ENCODE measurements at regions of chr6 and their contacts with region 1.

Region 1: GRCh38 chr6:29752451-29753308 is 29.4 kb downstream of the HLA-F start:
- DNase-seq: peak; percentile 69 to 86 (median 77)
- ATAC-seq: peak; percentile 87
- H3K4me3 ChIP-seq: peak overlapping the region; percentile 99
- H3K4me3 Mint-ChIP-seq: peak overlapping the region; percentile 85 to 97 (median 93)
- H3K27ac ChIP-seq: peak overlapping the region; percentile 69
- H3K27ac Mint-ChIP-seq: peak overlapping the region; percentile 16 to 96 (median 88)
- H3K4me1 ChIP-seq: peaks cover 10 to 16% of the 10 kb centered on the region in 2 donors
- H3K4me1 Mint-ChIP-seq: peaks cover 24 to 54% (median 48%) of the 10 kb centered on the region in 7 donors
- H3K27me3 ChIP-seq: no peaks in the 10 kb centered on the region
- H3K27me3 Mint-ChIP-seq: peaks cover 0 to 18% (median 0%) of the 10 kb centered on the region in 5 donors

Region 2: GRCh38 chr6:29632789-29633533 is 119.7 kb before region 1 on chr6 and contains the start of gene GABBR1:
- CTCF ChIA-PET with region 1: no interaction called
- POLR2A ChIA-PET with region 1: no interaction called
- intact Hi-C with region 1: loop called in 1 of 2 experiments (anchors 5 kb)
- DNase-seq: peak; percentile 54 to 85 (median 62)
- ATAC-seq: peak; percentile 89
- H3K4me3 ChIP-seq: peak within 1 kb of the TSS; percentile 51
- H3K4me3 Mint-ChIP-seq: peak within 1 kb of the TSS; percentile 77 to 98 (median 92)
- H3K27ac ChIP-seq: peak within 1 kb of the TSS; percentile 77
- H3K27ac Mint-ChIP-seq: peak within 1 kb of the TSS; percentile 19 to 97 (median 86)
- H3K4me1 ChIP-seq: peaks cover 27 to 29% of the 10 kb centered on the region in 2 donors
- H3K4me1 Mint-ChIP-seq: peaks cover 39 to 59% (median 54%) of the 10 kb centered on the region in 7 donors
- H3K27me3 ChIP-seq: no peaks in the 10 kb centered on the region
- H3K27me3 Mint-ChIP-seq: peaks cover 0 to 64% (median 0%) of the 10 kb centered on the region in 5 donors
- total RNA-seq, gene GABBR1: 37.0 to 115 (median 61.9) TPM

Region 3: DNA sequence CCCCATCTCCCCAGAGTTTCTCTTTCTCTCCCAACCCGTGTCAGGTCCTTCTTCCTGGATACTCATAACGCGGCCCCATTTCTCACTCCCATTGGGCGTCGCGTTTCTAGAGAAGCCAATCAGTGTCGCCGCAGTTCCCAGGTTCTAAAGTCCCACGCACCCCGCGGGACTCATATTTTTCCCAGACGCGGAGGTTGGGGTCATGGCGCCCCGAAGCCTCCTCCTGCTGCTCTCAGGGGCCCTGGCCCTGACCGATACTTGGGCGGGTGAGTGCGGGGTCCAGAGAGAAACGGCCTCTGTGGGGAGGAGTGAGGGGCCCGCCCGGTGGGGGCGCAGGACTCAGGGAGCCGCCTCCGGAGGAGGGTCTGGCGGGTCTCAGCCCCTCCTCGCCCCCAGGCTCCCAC is 29.4 kb before region 1 on chr6 and contains the start of gene HLA-F:
- CTCF ChIA-PET with region 1: interaction called, 3 read pairs
- POLR2A ChIA-PET with region 1: interaction called, 19 read pairs
- intact Hi-C with region 1: no loop called
- DNase-seq: peak; percentile 56 to 87 (median 79)
- ATAC-seq: peak; percentile 91
- H3K4me3 ChIP-seq: peak within 1 kb of the TSS; percentile 98
- H3K4me3 Mint-ChIP-seq: peak within 1 kb of the TSS; percentile 82 to 97 (median 95)
- H3K27ac ChIP-seq: peak within 1 kb of the TSS; percentile 100
- H3K27ac Mint-ChIP-seq: peak within 1 kb of the TSS; percentile 92 to 98 (median 95)
- H3K4me1 ChIP-seq: peaks cover 47 to 48% of the 10 kb centered on the region in 2 donors
- H3K4me1 Mint-ChIP-seq: peaks cover 32 to 63% (median 50%) of the 10 kb centered on the region in 7 donors
- H3K27me3 ChIP-seq: no peaks in the 10 kb centered on the region
- H3K27me3 Mint-ChIP-seq: no peaks in the 10 kb centered on the region
- total RNA-seq, gene HLA-F: 502 to 678 (median 522) TPM

Region 4: GRCh38 chr6:29776684-29777083 is 24.0 kb after region 1 on chr6:
- CTCF ChIA-PET with region 1: no interaction called
- POLR2A ChIA-PET with region 1: no interaction called
- intact Hi-C with region 1: no loop called
- DNase-seq: no peak
- ATAC-seq: no peak
- H3K4me3 ChIP-seq: no peak overlapping the region
- H3K4me3 Mint-ChIP-seq: no peak overlapping the region
- H3K27ac ChIP-seq: no peak overlapping the region
- H3K27ac Mint-ChIP-seq: no peak overlapping the region
- H3K4me1 ChIP-seq: no peaks in the 10 kb centered on the region
- H3K4me1 Mint-ChIP-seq: peaks cover 0 to 8% (median 0%) of the 10 kb centered on the region in 7 donors
- H3K27me3 ChIP-seq: peaks cover 0 to 3% of the 10 kb centered on the region in 2 donors
- H3K27me3 Mint-ChIP-seq: peaks cover 10 to 55% (median 49%) of the 10 kb centered on the region in 5 donors

Region 5: GRCh38 chr6:29792123-29793035 is 39.7 kb after region 1 on chr6:
- CTCF ChIA-PET with region 1: interaction called, 5 read pairs
- POLR2A ChIA-PET with region 1: interaction called, 5 read pairs
- intact Hi-C with region 1: loop called (anchors 1 to 2 kb)
- DNase-seq: peak; percentile 37 to 83 (median 67)
- ATAC-seq: peak; percentile 95
- H3K4me3 ChIP-seq: peak overlapping the region; percentile 80
- H3K4me3 Mint-ChIP-seq: peak overlapping the region; percentile 88 to 92 (median 89)
- H3K27ac ChIP-seq: peak overlapping the region; percentile 84
- H3K27ac Mint-ChIP-seq: peak overlapping the region; percentile 42 to 89 (median 79)
- H3K4me1 ChIP-seq: peaks cover 4 to 7% of the 10 kb centered on the region in 2 donors
- H3K4me1 Mint-ChIP-seq: peaks cover 15 to 38% (median 19%) of the 10 kb centered on the region in 7 donors
- H3K27me3 ChIP-seq: no peaks in the 10 kb centered on the region
- H3K27me3 Mint-ChIP-seq: peaks cover 7 to 72% (median 35%) of the 10 kb centered on the region in 5 donors

Region 6: DNA sequence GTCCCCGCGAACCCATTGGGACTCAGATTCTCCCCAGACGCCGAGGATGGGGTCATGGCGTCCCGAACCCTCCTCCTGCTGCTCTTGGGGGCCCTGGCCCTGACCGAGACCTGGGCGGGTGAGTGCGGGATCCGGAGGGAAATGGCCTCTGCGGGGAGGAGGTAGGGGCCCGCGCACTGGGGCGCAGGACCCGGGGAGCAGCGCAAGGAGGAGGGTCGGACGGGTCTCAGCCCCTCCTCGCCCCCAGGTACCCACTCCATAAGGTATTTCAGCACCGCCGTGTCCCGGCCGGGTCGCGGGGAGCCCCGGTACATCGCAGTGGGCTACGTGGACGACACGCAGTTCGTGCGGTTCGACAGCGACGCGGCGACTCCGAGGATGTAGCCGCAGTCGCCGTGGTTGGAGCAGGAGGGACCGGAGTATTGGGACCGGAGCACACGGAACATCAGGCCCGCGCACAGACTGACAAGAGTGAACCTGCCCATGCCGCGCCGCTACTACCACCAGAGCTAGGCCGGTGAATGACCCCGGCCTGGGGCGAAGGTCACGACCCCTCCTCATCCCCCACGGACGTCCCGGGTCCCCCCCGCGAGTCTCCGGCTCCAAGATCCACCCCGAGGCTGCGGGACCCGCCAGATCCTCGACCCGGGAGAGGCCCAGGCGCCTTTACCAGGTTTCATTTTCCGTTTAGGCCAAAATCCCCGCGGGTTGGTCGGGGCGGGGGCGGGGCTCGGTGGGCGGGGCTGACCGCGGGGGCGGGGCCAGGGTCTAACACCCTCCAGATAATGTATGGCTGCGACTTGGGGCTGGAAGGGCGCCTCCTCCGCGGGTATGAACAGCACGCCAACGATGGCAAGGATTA is 174.0 kb after region 1 on chr6:
- CTCF ChIA-PET with region 1: no interaction called
- POLR2A ChIA-PET with region 1: no interaction called
- intact Hi-C with region 1: loop called in 1 of 2 experiments (anchors 5 kb)
- DNase-seq: peak in 8 of 9 donors; percentile 40 to 90 (median 78)
- ATAC-seq: peak; percentile 96
- H3K4me3 ChIP-seq: peak overlapping the region; percentile 68
- H3K4me3 Mint-ChIP-seq: peak overlapping the region in 9 of 10 donors; percentile 83 to 97 (median 94)
- H3K27ac ChIP-seq: peak overlapping the region; percentile 95
- H3K27ac Mint-ChIP-seq: peak overlapping the region in 8 of 9 donors; percentile 90 to 99 (median 97)
- H3K4me1 ChIP-seq: peaks cover 4 to 15% of the 10 kb centered on the region in 2 donors
- H3K4me1 Mint-ChIP-seq: peaks cover 1 to 51% (median 15%) of the 10 kb centered on the region in 7 donors
- H3K27me3 ChIP-seq: no peaks in the 10 kb centered on the region
- H3K27me3 Mint-ChIP-seq: peaks cover 0 to 3% (median 0%) of the 10 kb centered on the region in 5 donors